Activated CD8-positive, alpha-beta T cell treated with anti-CD3 and anti-CD28 coated beads for 36 hours (primary cell): ENCODE measurements at regions of chr15 and their contacts with region 1.

Region 1: DNA sequence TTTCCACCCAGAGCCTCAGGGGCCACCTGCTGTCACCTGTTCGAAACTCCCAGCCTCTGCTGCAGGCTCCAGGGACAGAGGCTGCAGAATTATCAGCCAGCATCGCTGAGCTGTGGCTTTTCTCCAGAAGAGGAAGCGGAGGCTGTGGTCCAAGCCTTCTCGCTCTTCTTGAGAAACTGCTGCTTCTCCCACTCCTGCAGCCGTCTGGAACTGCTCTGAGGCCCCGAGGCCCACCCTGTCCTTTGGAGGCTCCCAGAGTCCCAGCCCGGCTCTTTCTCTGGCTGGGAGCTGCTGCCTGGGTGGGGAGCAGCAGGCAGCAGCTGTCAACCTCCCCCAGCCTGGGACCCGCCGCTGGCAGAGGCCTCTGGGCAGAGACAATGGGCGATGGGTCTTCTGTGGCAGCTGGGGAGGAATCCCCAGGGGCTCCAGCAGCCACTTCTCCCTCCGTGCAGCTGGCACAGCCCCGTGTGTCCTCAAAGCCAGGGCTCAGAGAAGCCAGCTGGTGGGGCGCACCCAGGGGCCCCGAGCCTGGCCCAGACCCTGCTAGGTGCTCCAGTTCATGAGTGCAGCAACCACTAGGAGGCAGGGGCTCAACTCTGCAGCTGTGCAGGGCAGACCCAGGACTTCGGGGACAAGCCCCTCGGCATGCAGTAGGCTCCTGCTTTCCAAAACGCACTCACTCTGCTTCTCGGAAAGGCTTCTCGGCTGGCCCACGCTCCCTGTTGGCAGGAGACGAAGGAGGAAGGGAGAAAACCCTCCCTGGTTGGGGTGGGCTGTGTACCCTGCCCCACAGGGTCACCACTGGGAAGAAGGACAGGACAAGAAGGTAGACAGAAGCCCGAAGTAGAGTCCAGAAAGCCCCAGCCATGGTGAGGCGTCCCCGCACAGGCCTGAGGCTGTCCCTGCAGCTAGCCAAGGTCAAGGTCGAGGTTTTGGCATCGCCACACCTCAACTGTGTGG is 49.9 kb upstream of the FURIN start:
- DNase-seq: peak; percentile 61
- ATAC-seq: peak; percentile 35
- H3K4me3 Mint-ChIP-seq: peak overlapping the region; percentile 5
- H3K27ac Mint-ChIP-seq: peak overlapping the region; percentile 78
- H3K4me1 Mint-ChIP-seq: peaks cover 53% of the 10 kb centered on the region
- H3K27me3 Mint-ChIP-seq: no peaks in the 10 kb centered on the region
- CTCF ChIP-seq: peak; percentile 40

Region 2: GRCh38 chr15:90829942-90830440 is 11.5 kb after region 1 on chr15:
- CTCF ChIA-PET with region 1: interaction called, 5 read pairs
- POLR2A ChIA-PET with region 1: interaction called, 13 read pairs
- intact Hi-C with region 1: no loop called
- DNase-seq: peak; percentile 86
- ATAC-seq: peak; percentile 90
- H3K4me3 Mint-ChIP-seq: peak overlapping the region; percentile 44
- H3K27ac Mint-ChIP-seq: peak overlapping the region; percentile 88
- H3K4me1 Mint-ChIP-seq: peaks cover 29% of the 10 kb centered on the region
- H3K27me3 Mint-ChIP-seq: no peaks in the 10 kb centered on the region
- CTCF ChIP-seq: no peak

Region 3: GRCh38 chr15:90839187-90840071 is 20.9 kb after region 1 on chr15:
- CTCF ChIA-PET with region 1: interaction called, 10 read pairs
- POLR2A ChIA-PET with region 1: interaction called, 6 read pairs
- intact Hi-C with region 1: no loop called
- DNase-seq: no peak
- ATAC-seq: no peak
- H3K4me3 Mint-ChIP-seq: peak overlapping the region; percentile 63
- H3K27ac Mint-ChIP-seq: peak overlapping the region; percentile 52
- H3K4me1 Mint-ChIP-seq: peaks cover 41% of the 10 kb centered on the region
- H3K27me3 Mint-ChIP-seq: no peaks in the 10 kb centered on the region
- CTCF ChIP-seq: no peak

Region 4: GRCh38 chr15:90869601-90870353 is 51.2 kb after region 1 on chr15:
- CTCF ChIA-PET with region 1: interaction called, 3 read pairs
- POLR2A ChIA-PET with region 1: interaction called, 5 read pairs
- intact Hi-C with region 1: loop called (anchors 5 kb)
- DNase-seq: peak; percentile 71
- ATAC-seq: peak; percentile 61
- H3K4me3 Mint-ChIP-seq: peak overlapping the region; percentile 90
- H3K27ac Mint-ChIP-seq: peak overlapping the region; percentile 94
- H3K4me1 Mint-ChIP-seq: peaks cover 51% of the 10 kb centered on the region
- H3K27me3 Mint-ChIP-seq: peaks cover 1% of the 10 kb centered on the region
- CTCF ChIP-seq: no peak